ENCODE measurements at regions of chr3 and their contacts with region 1.

Region 1: DNA sequence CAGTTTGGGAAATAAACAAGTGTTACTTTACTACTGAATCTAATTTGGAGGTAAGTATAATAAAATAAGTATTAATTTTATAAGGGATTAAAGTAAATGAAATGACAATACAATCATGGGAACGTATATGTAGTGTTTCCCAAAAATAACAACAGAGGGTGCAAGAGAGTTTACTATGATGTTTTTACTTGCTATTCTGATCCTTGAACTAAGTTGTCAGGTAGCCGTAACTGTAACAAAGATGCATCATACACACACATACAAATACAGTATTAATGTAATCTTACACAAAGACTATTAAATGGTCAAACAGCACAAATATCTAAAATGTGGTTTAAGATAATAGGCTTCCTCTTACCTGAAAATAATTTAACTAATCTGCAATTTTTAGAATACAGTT is 311.4 kb downstream of the TBC1D5 start:
- DNase-seq: no peak
- ATAC-seq: peak in 6 of 8 donors; percentile 37 to 71 (median 58)
- H3K4me3 ChIP-seq: no peak overlapping the region
- H3K27ac ChIP-seq: no peak overlapping the region
- H3K4me1 ChIP-seq: peaks cover 0 to 20% (median 0%) of the 10 kb centered on the region in 9 donors
- H3K27me3 ChIP-seq: no peaks in the 10 kb centered on the region
- CTCF ChIP-seq: peak in 8 of 9 donors; percentile 18 to 74 (median 58)

Region 2: GRCh38 chr3:17686613-17687012 is 255.6 kb after region 1 on chr3:
- intact Hi-C with region 1: loop called in 6 of 10 experiments (anchors 5 to 10 kb)
- DNase-seq: no peak
- ATAC-seq: peak in 1 of 8 donors; percentile 56
- H3K4me3 ChIP-seq: no peak overlapping the region
- H3K27ac ChIP-seq: no peak overlapping the region
- H3K4me1 ChIP-seq: peaks cover 0 to 11% (median 0%) of the 10 kb centered on the region in 9 donors
- H3K27me3 ChIP-seq: no peaks in the 10 kb centered on the region
- CTCF ChIP-seq: peak in 8 of 9 donors; percentile 15 to 53 (median 34)

Region 3: DNA sequence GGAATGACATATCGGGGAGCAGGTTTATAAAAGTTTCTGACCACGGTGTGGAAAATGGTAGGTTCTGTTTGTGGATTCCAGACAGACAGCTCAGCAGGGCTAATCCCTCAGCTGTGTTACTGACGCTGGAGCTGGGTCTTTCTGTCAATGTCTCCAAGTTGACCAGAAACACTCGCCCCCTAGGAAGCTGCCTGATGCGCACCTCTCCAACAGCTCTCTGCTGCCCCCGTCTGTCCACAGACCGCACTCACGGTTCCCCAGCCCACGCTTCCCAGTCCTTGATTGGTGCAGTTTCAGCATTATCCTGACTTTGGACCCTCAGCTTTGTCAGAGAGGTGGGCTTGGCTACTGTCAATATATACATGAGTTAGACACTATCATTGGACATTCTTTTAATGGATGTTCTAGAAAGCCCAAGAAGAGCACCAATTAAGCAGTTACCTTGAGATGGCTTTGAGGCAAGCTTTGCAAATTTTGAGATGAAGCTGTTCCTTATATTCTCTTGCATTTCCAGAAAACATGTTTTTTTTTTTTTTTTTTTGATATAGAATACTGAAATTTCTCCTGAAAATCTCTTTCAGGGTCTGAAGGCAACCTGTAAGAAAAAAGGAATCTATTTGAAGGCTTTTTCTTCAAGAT is 410.3 kb after region 1 on chr3:
- intact Hi-C with region 1: loop called (anchors 2 to 5 kb)
- DNase-seq: peak; percentile 70 to 76
- ATAC-seq: peak; percentile 74 to 91 (median 83)
- H3K4me3 ChIP-seq: no peak overlapping the region
- H3K27ac ChIP-seq: no peak overlapping the region
- H3K4me1 ChIP-seq: no peaks in the 10 kb centered on the region
- H3K27me3 ChIP-seq: peaks cover 0 to 18% (median 0%) of the 10 kb centered on the region in 7 donors
- CTCF ChIP-seq: peak; percentile 85 to 97 (median 95)